GM18951 (cell line): ENCODE measurements at regions of chr12 and their contacts with region 1.

Region 1: GRCh38 chr12:92561543-92561899 is 141.3 kb upstream of the PLEKHG7 start:
- POLR2A ChIP-seq: no peak

Region 2: DNA sequence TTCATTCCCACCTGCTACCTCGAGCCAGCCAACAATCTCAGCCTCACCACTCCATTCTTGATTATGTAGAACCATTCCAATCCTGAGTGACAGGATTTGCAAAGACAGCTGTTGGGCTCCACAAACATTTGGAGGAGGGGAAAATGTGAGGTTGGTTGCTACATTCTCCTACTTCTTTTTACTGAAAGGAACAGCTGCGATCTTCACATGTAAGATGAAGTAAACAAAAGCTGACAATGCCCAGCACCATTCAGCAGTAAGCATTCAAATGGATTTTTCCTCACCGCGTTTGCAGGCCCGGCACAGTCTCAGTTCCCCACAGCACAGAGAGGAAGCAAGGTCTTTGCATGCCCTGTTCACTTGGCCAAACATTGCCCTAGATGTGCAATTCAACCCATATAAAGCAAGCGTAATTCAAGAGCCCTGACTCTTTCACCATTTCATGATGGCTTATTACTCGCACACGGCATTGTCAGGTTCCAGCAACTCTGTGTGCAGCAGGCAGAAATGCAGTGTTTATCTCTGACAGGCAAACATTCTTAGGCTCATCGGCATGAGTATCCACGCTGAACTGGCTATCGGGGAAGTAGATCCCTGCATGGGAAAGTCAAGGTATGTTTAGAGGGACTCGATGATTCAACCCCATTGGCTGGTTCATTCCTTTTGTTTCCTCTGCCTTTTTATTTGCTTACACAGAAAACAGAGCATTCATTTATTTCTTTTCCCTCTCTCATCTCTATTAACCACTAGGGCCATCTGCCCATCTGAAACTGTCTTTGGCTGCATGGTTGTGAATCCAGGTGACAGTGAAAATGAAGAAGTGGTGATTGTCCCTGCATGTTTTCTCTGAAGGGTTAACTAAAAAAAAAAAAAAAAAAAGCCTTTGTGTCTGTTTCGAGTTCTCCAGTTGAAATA is 94.9 kb before region 1 on chr12:
- in situ Hi-C with region 1: loop called (anchors 10 kb)
- POLR2A ChIP-seq: peak; percentile 75

Region 3: GRCh38 chr12:92505254-92506231 is 56.0 kb before region 1 on chr12:
- in situ Hi-C with region 1: loop called (anchors 10 kb)
- POLR2A ChIP-seq: peak; percentile 34